GM10248 (cell line): ENCODE measurements at regions of chr14 and their contacts with region 1.

Region 1: GRCh38 chr14:50410921-50411320 is 14.2 kb upstream of the CDKL1 start:
- DNase-seq: no peak
- CTCF ChIP-seq: no peak

Region 2: DNA sequence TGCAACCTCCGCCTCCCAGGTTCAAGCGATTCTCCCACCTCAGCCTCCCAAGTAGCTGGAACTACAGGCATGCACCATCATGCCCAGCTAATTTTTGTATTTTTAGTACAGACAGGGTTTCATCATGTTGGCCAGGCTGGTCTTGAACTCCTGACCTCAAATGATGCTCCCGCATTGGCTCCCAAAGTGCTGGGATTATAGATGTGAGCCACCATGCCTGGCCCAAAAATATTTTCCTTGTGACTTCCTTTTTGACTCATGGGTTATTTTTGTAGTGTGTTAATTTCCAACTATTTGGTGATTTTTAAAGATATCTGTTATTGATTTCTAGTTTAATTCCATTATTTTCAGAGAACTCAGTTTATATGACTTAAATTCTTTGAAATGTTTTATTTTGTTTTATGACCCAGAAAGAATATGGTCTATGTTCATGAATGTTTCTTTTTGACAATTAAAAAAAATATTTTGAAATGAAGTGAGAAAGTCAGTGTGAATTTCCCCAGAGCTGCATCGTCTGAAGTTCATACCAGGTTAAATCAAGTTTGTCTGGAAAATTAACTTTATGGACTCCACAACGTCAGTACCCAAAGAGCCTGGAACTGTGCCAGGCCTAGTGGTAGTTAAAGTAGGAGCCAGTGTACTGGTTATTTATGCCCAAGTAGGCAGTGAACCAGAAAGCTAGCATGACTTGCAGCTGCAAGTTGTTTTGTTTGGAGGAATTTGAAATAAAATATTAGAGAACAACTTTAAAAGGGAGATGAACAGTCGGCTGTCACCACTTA is 11.5 kb before region 1 on chr14:
- CTCF ChIA-PET with region 1: interaction called, 16 read pairs
- POLR2A ChIA-PET with region 1: no interaction called
- DNase-seq: no peak
- CTCF ChIP-seq: no peak

Region 3: GRCh38 chr14:50421499-50421898 is 10.6 kb after region 1 on chr14:
- CTCF ChIA-PET with region 1: interaction called, 13 read pairs
- POLR2A ChIA-PET with region 1: no interaction called
- DNase-seq: no peak
- CTCF ChIP-seq: no peak

Region 4: GRCh38 chr14:50607181-50607580 is 196.3 kb after region 1 on chr14:
- CTCF ChIA-PET with region 1: no interaction called
- POLR2A ChIA-PET with region 1: no interaction called
- DNase-seq: no peak
- CTCF ChIP-seq: no peak